Thyroid gland (tissue), 4 donors: ENCODE measurements at regions of chr11 and their contacts with region 1.

Region 1: GRCh38 chr11:45964911-45965389 is 42.5 kb downstream of the LARGE2 start:
- DNase-seq: peak; percentile 57 to 64
- H3K4me3 ChIP-seq: no peak overlapping the region
- H3K27ac ChIP-seq: peak overlapping the region; percentile 10 to 34 (median 13)
- H3K4me1 ChIP-seq: no peaks in the 10 kb centered on the region
- H3K27me3 ChIP-seq: no peaks in the 10 kb centered on the region
- CTCF ChIP-seq: peak; percentile 72 to 94 (median 82)
- POLR2A ChIP-seq: no peak

Region 2: GRCh38 chr11:46121724-46122477 is 157.0 kb after region 1 on chr11:
- intact Hi-C with region 1: loop called (anchors 10 kb)
- DNase-seq: peak; percentile 73 to 80
- H3K4me3 ChIP-seq: peak overlapping the region in 2 of 3 donors; percentile 45 to 87
- H3K27ac ChIP-seq: peak overlapping the region; percentile 59 to 80 (median 74)
- H3K4me1 ChIP-seq: peaks cover 19 to 20% of the 10 kb centered on the region in 2 donors
- H3K27me3 ChIP-seq: no peaks in the 10 kb centered on the region
- CTCF ChIP-seq: no peak
- POLR2A ChIP-seq: peak in 1 of 2 donors; percentile 26